ENCODE measurements at regions of chr17 and their contacts with region 1.

Region 1: DNA sequence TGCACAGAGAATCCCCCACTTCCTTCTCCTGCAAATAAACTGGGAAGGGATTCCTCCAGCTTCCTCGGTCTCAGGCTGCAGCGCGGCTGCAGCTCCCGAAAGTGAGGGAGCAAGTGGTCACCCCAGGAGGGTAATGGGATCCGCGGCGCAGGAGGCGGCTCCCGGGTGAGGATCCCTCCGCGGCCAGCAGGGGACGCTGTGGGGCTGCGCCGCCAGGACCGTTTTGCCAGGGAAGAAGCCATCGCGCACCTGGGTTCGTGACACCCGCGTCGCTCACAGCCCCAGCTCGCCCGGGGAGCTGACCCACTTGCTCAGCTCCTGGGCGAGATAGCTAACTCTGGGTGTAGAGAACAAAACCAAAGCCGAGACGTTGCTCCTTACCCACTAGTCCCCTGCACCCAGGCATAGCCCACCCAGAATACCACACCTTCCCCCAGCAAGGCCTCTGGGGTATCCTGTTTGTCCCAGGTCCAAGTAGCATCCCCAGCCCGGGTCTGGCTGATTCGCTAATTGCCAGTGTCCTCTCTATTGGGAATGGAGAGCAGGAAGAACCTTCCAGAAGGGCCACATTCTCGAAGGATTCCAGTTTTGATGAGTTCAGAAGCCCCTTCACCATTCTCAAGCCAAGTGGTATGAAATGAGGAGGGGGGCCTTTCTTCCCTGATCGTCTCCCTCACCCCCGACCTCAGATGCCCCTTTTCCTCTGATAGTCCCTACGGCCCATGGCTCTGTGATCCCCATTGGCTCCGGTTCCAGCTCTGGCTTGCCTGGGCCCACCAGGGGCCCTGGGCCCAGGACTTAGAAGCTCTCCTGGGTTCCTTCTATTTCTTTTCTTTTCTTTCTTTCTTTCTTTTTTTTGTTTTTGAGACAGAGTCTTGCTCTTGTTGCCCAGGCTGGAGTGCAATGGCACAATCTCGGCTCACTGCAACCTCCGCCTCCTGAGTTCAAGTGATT is 14.1 kb downstream of the CYGB start:
- DNase-seq: peak; percentile 82
- H3K27ac ChIP-seq: peak overlapping the region; percentile 86
- CTCF ChIP-seq: peak; percentile 100

Region 2: DNA sequence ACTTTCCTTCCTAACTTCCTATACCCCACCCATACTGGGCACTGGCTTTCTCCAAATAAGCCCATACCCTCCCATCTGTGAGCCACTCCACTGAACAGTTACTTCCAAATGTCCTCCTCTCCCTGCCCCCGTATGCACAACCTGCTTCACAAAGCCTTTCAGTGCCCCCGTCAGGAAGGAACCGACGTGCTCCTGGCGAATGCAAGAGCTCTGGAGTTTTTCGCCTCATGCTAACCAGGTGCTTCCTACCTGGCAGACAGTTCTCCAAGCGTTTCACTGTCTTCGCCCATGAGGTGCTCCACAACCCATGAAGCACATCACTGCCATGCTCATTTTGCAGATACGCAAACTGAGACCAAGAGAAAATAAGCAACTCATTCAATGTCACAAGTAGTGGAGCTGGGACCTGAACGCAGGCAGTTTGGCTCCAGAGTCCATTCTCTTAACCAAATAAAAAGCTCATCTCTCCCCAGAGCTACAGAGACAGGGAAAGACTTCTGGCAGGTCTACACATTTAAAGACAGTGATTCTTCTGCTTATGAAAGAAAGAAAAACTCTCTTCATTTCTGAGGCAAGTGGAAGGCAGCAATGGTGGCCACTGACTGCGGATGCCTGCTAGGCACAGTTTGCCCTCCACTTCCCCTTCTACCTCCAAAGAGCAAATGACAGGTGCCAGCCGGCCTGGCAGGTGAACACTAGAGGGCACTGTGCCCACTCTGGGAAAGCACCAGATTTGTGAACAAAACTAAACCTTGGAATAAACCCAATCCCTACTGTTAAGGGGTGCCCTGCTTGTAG is 115.1 kb before region 1 on chr17:
- CTCF ChIA-PET with region 1: no interaction called
- POLR2A ChIA-PET with region 1: no interaction called
- DNase-seq: peak; percentile 60
- H3K27ac ChIP-seq: peak overlapping the region; percentile 12; the same call in 1 of the 2 replicates
- CTCF ChIP-seq: peak; percentile 99

Region 3: GRCh38 chr17:76511668-76512365 is 11.5 kb before region 1 on chr17:
- CTCF ChIA-PET with region 1: interaction called, 13 read pairs
- POLR2A ChIA-PET with region 1: no interaction called
- DNase-seq: no peak
- H3K27ac ChIP-seq: no peak overlapping the region
- CTCF ChIP-seq: no peak

Region 4: DNA sequence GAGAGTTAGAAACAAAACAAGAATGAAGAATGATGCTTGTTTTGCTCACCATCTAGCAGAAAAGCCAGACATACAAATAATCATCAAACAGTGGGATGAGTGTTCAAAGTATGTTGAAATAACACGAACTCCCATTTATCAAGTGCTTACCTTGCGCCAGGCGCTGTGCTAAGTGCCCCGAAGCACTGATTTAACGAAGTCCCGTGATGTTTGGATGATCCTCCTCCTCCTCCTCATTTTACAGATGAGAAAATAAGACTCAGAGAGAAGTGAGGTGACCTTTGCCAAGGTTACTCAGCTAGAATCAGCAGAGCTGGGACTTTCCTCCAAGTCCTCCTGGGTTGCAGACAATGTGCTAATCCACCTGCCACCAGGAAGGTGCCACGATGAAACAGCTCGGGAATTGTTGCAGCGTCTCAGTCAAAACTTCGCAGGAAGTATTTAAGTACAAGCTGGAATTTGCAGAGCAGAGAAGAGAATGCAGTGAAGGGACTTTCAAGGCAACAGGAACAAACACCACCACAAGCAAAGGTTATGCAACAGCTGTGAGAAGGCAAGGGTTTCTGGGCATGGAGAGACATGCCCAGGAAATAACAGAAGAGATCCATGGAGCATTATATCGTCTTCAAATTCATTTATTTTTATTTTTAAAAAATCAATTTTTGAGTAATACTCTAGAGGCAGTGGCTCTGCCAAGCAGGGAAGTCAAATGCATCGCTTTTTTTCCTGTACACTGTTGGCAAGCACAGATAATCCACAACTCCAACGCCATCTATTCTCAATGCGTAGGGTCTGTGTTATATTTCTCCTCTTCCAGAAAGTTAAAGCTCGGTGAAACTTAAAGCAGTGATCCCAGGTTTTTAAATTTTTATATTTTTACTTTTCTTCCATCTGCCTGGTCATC is 27.6 kb after region 1 on chr17:
- CTCF ChIA-PET with region 1: interaction called, 12 read pairs
- POLR2A ChIA-PET with region 1: interaction called, 3 read pairs
- DNase-seq: no peak
- H3K27ac ChIP-seq: peak overlapping the region; percentile 91
- CTCF ChIP-seq: no peak

Region 5: DNA sequence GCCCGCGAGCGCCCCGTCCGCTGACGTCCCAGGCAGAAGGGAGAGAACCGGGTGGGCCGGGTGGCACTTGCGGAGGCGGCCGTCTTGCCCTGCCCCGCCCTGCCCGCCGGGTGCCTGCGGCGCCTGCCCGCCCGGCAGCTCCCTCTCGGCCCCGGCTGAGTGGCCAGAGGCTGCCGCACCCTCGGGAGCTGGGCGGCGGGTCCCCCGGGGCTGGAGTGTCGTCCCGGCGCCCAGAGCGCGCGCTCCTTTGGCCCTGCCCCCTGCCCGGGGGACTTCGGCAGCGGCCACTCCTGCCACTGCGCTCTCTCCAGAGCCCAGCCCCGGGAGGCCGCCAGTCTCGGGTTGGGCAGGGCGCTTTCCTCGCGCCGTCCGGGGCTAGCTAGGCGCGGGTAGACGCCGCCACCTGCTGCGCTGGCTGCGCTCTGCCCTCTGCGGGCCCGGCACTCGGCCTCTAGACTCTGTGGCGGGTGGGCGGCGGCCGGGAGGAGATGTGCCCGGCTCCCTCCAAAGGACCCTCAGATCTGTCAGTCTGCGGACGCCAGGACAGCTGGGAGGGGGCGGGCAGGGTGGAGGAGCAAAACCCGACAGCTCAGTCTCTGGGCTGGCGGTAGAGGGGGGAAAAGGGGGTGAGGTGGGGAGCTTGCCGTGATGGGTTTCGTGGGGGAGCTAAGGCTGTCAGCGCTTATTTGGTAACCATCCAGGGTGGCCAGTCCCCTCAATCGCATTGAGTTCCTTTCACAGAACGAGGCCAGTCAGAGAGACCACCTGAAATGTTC is 62.6 kb after region 1 on chr17 and contains the start of gene ST6GALNAC2:
- CTCF ChIA-PET with region 1: interaction called, 26 read pairs
- POLR2A ChIA-PET with region 1: no interaction called
- DNase-seq: peak; percentile 55
- H3K27ac ChIP-seq: peak within 1 kb of the TSS; percentile 96
- CTCF ChIP-seq: peak; percentile 79

Region 6: GRCh38 chr17:76638263-76638662 is 114.9 kb after region 1 on chr17:
- CTCF ChIA-PET with region 1: no interaction called
- POLR2A ChIA-PET with region 1: no interaction called
- DNase-seq: no peak
- H3K27ac ChIP-seq: no peak overlapping the region
- CTCF ChIP-seq: no peak

Region 7: DNA sequence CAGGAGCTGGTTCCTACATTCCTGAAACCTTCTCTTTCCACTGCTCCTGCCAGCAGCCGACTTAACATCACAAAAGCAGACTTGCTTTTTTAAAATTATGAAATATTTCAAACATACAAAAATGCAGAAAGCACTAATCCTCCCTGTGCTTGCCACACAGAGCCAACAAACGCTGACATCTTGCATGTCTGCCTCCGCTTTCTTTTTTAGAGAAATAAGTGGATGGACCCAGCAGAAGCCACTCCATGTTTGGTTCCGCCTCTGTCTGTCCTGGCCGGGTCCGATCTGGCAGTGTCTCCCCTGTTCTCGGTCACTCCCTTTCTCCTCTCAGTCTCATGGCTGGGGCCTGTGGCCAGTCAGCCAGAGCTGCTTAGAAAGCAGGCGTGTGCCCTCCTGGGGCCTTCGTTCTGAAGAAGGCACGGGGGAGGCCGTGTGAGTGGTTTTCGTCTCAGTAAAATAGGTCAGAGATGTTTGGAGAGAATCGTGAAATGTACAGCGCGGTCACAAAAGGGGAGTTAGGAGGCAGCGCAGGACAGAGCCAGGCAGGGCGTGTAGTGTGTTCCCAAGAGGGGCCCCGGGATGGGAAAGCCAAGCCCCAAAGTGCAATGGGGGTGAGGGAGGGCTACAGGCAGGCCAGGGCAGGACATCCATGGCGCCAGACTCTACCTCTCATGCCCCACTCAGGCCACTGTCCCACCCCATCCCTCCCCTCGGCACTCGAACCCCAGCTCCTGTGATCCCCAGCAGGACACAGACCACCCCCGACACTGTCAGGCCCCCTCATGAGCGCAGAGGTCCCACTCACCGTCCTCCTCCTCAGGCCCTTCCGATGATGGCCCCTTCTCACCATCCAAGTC is 164.2 kb after region 1 on chr17:
- CTCF ChIA-PET with region 1: no interaction called
- POLR2A ChIA-PET with region 1: no interaction called
- DNase-seq: no peak
- H3K27ac ChIP-seq: peak overlapping the region; percentile 64
- CTCF ChIP-seq: no peak